Posterior cingulate gyrus (tissue), 11 donors: ENCODE measurements at regions of chr20 and their contacts with region 1.

Region 1: DNA sequence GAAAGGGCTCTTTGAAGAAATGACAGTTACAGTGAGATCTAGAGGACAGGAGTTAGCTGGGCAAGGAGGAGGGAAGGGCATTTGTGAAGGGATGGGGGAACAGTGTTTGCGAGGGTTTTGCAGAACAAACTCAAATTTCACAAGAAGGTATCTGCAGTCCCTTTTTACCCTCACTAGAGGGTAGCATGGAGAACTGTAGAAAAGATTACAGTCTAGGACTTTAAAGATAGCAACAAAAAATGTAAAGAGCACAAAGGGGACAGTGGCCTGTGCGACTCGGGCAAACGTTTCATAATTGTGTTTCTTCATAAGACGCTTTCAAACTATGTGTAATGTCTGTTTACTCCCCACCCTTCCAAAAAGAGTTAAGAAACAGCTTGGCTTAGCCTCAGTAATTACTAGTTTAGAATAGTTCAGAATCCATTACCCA is 21.2 kb upstream of the ASXL1 start:
- DNase-seq: no peak

Region 2: GRCh38 chr20:32451682-32452462 is 114.9 kb after region 1 on chr20:
- intact Hi-C with region 1: loop called (anchors 5 kb)
- DNase-seq: peak in 3 of 10 donors; percentile 77 to 83 (median 78)